H1 (cell line): ENCODE measurements at regions of chr2 and their contacts with region 1.

Region 1: DNA sequence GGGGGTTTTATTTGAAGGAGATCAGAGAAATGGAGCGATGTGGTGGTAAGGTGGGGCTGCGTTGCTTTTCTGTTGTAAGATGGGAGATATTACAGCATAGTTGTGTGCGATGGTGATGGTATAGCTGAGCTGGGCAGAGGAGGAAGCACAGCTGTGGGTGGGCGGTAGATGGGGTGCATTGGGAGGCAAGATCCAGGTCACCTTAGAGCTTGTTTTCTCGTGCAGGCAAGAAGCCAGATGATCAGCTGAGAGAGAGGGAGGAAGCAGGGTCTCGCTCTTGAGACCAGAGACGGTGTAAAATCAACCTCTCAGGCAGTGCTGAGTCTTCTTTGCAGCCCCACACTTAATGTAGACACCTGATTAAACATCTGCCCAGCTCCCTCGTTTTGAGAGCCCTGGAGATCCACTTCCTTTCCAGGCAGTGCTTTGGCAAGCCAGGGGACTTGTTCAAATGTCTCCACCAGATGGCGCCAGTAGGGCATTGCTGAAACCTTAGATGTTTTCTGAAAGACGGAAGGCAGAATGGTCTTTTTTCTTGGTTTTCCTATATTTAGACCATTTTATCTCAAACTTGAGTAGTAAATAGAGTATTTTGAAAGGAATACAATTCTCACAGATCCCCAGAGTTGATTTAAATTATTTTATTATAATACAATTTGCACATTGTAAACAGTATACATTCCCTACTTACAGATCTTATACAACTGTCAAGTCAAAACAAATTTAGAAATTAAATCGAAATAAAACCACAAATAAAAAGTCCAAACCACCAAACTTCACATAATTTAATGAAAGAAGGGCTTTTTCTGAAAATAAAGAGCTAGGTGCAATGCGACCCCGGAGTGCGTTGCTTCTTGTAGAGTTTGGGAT is 21.1 kb upstream of the LYPD6B start:
- DNase-seq: peak; percentile 27 to 89
- H3K4me3 ChIP-seq: no peak overlapping the region
- H3K27ac ChIP-seq: no peak overlapping the region
- H3K4me1 ChIP-seq: peaks cover 0 to 2% (median 1%) of the 10 kb centered on the region in 4 experiments; a peak in 1 of 7 replicates
- H3K27me3 ChIP-seq: no peaks in the 10 kb centered on the region
- CTCF ChIP-seq: peak; percentile 72 to 87 (median 82)
- EP300 ChIP-seq: no peak
- POLR2A ChIP-seq: no peak
- RAD21 ChIP-seq: peak; percentile 89 to 90

Region 2: GRCh38 chr2:148860037-148860436 is 157.3 kb before region 1 on chr2:
- CTCF ChIA-PET with region 1: no interaction called
- POLR2A ChIA-PET with region 1: no interaction called
- DNase-seq: no peak
- H3K4me3 ChIP-seq: no peak overlapping the region
- H3K27ac ChIP-seq: no peak overlapping the region
- H3K4me1 ChIP-seq: no peaks in the 10 kb centered on the region
- H3K27me3 ChIP-seq: peaks cover 0 to under 1% (median under 1%) of the 10 kb centered on the region in 4 experiments; a peak in 1 of 7 replicates
- CTCF ChIP-seq: no peak
- EP300 ChIP-seq: no peak
- POLR2A ChIP-seq: no peak
- RAD21 ChIP-seq: no peak

Region 3: DNA sequence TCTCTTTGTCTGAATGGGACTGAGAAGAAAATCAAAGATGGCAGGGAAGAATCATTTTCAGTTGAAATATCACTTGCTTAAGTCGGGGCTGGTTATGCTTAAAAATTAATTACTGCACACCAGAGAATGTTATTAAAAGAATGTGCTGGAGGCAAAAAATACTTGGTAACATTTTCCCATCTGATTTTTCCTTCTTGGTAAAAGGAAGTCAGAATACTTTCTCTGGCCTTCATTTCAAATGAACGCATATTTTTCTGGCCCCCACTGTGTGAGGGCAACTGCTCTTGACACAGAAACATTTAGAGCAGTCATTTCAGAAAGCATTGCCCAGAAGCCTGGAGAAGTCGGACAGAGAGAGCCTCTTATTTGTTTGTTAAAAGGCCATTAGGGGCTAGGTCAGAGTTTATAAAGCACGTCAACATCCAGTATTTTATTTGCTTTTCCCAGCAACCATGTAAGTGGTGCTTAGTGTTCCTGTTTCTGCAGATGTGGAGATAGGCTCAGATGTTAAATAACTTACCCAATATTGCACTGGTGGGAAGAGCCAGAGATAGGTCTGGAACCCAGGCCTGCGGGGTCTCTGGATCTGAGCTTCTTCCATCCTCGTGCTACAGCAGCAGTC is 11.8 kb before region 1 on chr2:
- CTCF ChIA-PET with region 1: interaction called, 277 read pairs
- POLR2A ChIA-PET with region 1: interaction called, 3 read pairs
- DNase-seq: no peak
- H3K4me3 ChIP-seq: no peak overlapping the region
- H3K27ac ChIP-seq: no peak overlapping the region
- H3K4me1 ChIP-seq: peaks cover 6 to 25% (median 10%) of the 10 kb centered on the region in 4 experiments; a peak in 5 of 7 replicates
- H3K27me3 ChIP-seq: no peaks in the 10 kb centered on the region
- CTCF ChIP-seq: no peak
- EP300 ChIP-seq: no peak
- POLR2A ChIP-seq: no peak
- RAD21 ChIP-seq: no peak

Region 4: DNA sequence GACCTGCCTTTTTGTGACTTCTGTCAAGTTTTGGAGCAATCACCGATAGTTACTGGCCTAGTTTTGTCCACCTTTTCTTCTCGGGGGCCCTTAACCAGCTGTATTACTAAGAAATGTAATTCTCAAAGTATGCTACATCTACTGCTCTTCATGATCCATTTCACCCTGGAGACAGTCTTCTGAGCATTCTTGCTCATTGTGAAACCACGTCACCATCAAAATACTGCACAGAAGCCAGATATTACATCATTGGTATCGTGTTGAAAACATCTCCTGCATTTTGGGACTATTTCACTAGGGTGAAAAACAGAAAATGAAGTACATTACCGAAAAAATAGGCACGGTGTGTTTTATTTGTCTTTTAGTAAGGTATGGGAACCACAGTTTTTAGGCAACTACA is 32.8 kb after region 1 on chr2:
- CTCF ChIA-PET with region 1: interaction called, 11 read pairs
- POLR2A ChIA-PET with region 1: no interaction called
- DNase-seq: no peak
- H3K4me3 ChIP-seq: no peak overlapping the region
- H3K27ac ChIP-seq: no peak overlapping the region
- H3K4me1 ChIP-seq: no peaks in the 10 kb centered on the region
- H3K27me3 ChIP-seq: no peaks in the 10 kb centered on the region
- CTCF ChIP-seq: no peak
- EP300 ChIP-seq: no peak
- POLR2A ChIP-seq: no peak
- RAD21 ChIP-seq: no peak

Region 5: GRCh38 chr2:149313512-149313972 is 296.2 kb after region 1 on chr2:
- CTCF ChIA-PET with region 1: interaction called, 44 read pairs
- POLR2A ChIA-PET with region 1: no interaction called
- DNase-seq: peak in 1 of 2 experiments; percentile 64
- H3K4me3 ChIP-seq: no peak overlapping the region; a peak in 1 of 8 replicates
- H3K27ac ChIP-seq: no peak overlapping the region
- H3K4me1 ChIP-seq: peaks cover 0 to 11% (median 7%) of the 10 kb centered on the region in 4 experiments; a peak in 5 of 7 replicates
- H3K27me3 ChIP-seq: no peaks in the 10 kb centered on the region
- CTCF ChIP-seq: peak; percentile 64 to 96 (median 85)
- EP300 ChIP-seq: no peak
- POLR2A ChIP-seq: no peak
- RAD21 ChIP-seq: peak; percentile 83 to 91